ENCODE measurements at regions of chr6 and their contacts with region 1.

Region 1: DNA sequence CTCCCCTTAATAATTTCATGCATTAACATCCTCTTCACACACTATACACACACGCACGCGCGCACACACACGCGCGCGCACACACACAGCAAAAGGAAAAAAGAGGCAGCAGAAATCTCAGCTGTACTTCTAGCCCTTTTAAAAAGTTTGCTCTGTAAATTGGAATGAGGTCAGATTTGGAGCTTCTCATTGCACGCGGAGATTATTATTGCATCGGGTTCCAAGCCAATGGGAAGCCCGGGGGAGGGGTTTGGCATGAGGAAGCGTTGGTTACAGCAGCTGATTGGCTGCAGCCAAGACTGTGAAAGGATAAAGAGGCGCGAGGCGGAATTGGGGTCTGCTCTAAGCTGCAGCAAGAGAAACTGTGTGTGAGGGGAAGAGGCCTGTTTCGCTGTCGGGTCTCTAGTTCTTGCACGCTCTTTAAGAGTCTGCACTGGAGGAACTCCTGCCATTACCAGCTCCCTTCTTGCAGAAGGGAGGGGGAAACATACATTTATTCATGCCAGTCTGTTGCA is at the start of gene SOX4:
- DNase-seq: peak; percentile 17 to 45 (median 34)
- ATAC-seq: peak; percentile 36; the same call in 2 of the 3 replicates
- H3K4me3 ChIP-seq: peak within 1 kb of the TSS; percentile 18
- H3K27ac ChIP-seq: no peak within 1 kb of the TSS
- H3K4me1 ChIP-seq: peaks cover 0 to 32% of the 10 kb centered on the region in 2 experiments; a peak in 2 of 5 replicates
- H3K27me3 ChIP-seq: peaks cover 8 to 21% of the 10 kb centered on the region in 2 experiments; a peak in 3 of 5 replicates
- CTCF ChIP-seq: no peak
- EP300 ChIP-seq: no peak
- POLR2A ChIP-seq: no peak
- RAD21 ChIP-seq: no peak
- polyA plus RNA-seq, gene SOX4: 0.07 to 0.21 TPM

Region 2: DNA sequence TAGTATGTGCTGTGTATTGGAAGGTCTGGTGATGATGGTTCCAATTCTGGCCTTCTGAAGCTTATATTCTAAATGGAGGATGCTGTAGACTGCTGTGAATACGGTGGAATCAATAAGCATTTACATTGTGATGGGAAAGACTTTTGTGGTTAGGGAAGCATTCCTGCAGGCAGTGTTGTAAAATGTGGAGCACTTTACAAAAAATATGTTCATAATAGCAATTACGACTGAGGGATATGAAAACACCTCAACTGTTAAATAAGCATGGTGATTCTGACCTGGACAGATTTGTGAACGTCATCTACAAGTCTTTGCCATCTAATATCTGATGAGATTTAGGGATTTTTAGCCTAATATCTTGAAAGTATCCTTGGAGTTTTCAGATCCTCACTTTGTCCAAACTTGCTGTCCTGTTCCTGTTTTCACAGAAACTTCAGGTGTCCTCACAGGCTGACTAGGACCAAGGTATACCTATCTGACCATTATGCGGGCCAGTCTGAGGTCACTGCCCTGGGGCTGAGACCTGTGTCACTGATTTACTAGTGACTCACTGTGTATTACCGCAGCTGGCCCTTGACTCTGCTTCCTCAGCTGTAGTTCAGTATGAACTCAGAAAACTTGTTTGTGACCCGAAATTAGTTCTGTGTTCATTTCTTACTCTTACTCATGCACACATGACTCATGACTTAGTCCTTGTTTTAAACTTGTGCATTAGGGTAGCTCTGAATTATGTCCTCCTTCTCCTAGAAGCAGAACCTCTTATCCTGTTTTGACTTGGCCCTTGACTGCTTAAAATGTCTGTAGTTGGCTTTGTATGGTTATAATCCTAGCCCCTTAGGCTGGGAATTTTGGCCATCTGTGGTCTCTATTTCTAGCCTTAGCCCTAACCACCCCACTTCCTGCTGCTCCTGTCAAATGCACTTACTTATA is 716.2 kb before region 1 on chr6:
- CTCF ChIA-PET with region 1: interaction called, 3 read pairs
- POLR2A ChIA-PET with region 1: no interaction called
- in situ Hi-C with region 1: no loop called
- intact Hi-C with region 1: loop called (anchors 10 kb)
- DNase-seq: peak in 2 of 4 experiments; percentile 15 to 37
- ATAC-seq: peak; percentile 73
- H3K4me3 ChIP-seq: no peak overlapping the region
- H3K27ac ChIP-seq: no peak overlapping the region
- H3K4me1 ChIP-seq: no peaks in the 10 kb centered on the region; a peak in 1 of 5 replicates
- H3K27me3 ChIP-seq: no peaks in the 10 kb centered on the region
- CTCF ChIP-seq: no peak
- EP300 ChIP-seq: no peak; the same call in 1 of the 2 replicates
- POLR2A ChIP-seq: no peak
- RAD21 ChIP-seq: no peak

Measured in K562 (cell line).